ENCODE measurements at regions of chr4 and their contacts with region 1.

Region 1: GRCh38 chr4:82394910-82395309 is 21.1 kb upstream of the HNRNPD start:
- DNase-seq: peak; percentile 96
- H3K4me3 ChIP-seq: no peak overlapping the region
- H3K27ac ChIP-seq: peak overlapping the region; percentile 68
- H3K4me1 ChIP-seq: peaks cover 18% of the 10 kb centered on the region
- H3K27me3 ChIP-seq: no peaks in the 10 kb centered on the region
- CTCF ChIP-seq: no peak

Region 2: GRCh38 chr4:82379964-82380733 is 14.8 kb before region 1 on chr4:
- CTCF ChIA-PET with region 1: interaction called, 4 read pairs
- dilution Hi-C with region 1: no loop called
- in situ Hi-C with region 1: no loop called
- intact Hi-C with region 1: loop called (anchors 2 kb)
- DNase-seq: peak; percentile 96
- H3K4me3 ChIP-seq: no peak overlapping the region
- H3K27ac ChIP-seq: no peak overlapping the region
- H3K4me1 ChIP-seq: peaks cover 16% of the 10 kb centered on the region
- H3K27me3 ChIP-seq: no peaks in the 10 kb centered on the region
- CTCF ChIP-seq: peak; percentile 11 to 48